Activated T-helper 1 cell treated with anti-CD3 and anti-CD28 coated beads, Interleukin-12 subunit alpha, Interleukin-12 subunit beta, Interleukin-2, Interleukin-4 antibody, amounts not matched to agents 30 ng/mL and 10 ng/mL and 1 ng/mL, durations not matched to agents 14 hours and 24 hours and 36 hours (primary cell): ENCODE measurements at regions of chr13 and their contacts with region 1.

Region 1: DNA sequence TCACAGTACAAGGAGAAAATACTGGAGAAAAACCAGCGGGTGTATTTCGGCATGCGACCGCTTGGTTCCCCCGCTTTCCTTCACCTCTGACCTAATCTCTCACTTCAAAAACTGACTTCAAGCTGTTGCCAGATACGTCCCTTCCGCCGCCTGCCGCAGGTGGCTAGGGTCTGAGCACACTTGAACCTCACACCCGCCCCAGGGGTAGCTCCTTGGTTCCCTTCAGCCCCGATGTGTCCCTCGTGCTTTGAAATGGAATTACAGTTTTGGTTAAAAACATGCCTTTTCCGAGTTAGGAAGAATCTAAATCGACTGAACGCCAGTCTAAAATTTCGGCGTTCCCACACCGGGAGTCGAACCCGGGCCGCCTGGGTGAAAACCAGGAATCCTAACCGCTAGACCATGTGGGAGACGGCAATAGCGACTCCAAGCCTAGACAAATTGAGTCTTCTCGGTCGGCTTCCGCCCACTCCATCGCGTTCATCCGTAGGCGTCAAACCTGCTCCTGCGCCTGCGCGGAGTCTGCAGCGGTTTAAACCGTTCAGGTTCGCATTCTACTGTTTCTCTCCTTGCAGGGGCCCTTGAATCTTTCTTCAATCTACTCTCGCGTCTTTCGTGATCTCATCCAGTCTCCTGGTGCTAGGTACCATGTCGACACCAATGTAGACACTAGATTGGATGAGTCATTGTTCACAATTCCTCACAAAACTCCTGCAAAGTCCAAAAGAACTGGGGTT is 71.5 kb downstream of the NUFIP1 start:
- DNase-seq: peak; percentile 94
- H3K4me3 Mint-ChIP-seq: no peak overlapping the region
- H3K27ac Mint-ChIP-seq: no peak overlapping the region
- H3K4me1 Mint-ChIP-seq: no peaks in the 10 kb centered on the region
- H3K27me3 Mint-ChIP-seq: no peaks in the 10 kb centered on the region

Region 2: GRCh38 chr13:44141725-44142539 is 775.8 kb before region 1 on chr13:
- intact Hi-C with region 1: loop called (anchors 1 kb)
- DNase-seq: peak; percentile 94
- H3K4me3 Mint-ChIP-seq: peak overlapping the region; percentile 85
- H3K27ac Mint-ChIP-seq: peak overlapping the region; percentile 82
- H3K4me1 Mint-ChIP-seq: peaks cover 26% of the 10 kb centered on the region
- H3K27me3 Mint-ChIP-seq: peaks cover 41% of the 10 kb centered on the region

Region 3: DNA sequence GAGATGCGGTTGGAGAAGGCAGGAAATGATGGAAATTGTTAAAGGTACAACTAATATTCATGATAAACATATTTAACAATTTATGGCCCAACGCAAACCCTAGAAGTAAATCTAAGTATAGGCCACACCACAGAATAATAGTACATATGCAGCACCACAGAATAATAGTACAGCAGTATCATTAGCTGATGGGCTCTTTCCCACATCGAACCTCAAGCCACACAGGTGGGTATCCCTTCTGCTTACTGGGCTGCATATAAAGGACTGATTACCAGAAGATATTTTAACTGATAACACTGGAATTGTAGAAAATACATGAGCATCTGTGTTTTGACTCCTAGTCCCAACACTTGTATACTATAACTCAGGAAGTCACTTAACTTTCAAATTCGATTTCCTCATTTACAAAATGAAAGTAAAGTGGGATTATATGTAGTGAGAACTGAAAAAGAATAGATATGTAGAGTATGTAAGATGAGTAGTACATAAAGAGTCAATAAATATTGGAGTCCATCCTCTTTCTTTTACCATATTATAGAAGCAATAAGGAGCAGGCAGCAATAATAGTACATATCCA is 433.1 kb before region 1 on chr13:
- intact Hi-C with region 1: loop called (anchors 1 kb)
- DNase-seq: no peak
- H3K4me3 Mint-ChIP-seq: peak overlapping the region; percentile 24
- H3K27ac Mint-ChIP-seq: no peak overlapping the region
- H3K4me1 Mint-ChIP-seq: peaks cover 17% of the 10 kb centered on the region
- H3K27me3 Mint-ChIP-seq: peaks cover 7% of the 10 kb centered on the region

Region 4: GRCh38 chr13:44768239-44768638 is 149.5 kb before region 1 on chr13:
- intact Hi-C with region 1: loop called (anchors 2 kb)
- DNase-seq: peak; percentile 63
- H3K4me3 Mint-ChIP-seq: peak overlapping the region; percentile 41
- H3K27ac Mint-ChIP-seq: peak overlapping the region; percentile 82
- H3K4me1 Mint-ChIP-seq: peaks cover 56% of the 10 kb centered on the region
- H3K27me3 Mint-ChIP-seq: no peaks in the 10 kb centered on the region

Region 5: DNA sequence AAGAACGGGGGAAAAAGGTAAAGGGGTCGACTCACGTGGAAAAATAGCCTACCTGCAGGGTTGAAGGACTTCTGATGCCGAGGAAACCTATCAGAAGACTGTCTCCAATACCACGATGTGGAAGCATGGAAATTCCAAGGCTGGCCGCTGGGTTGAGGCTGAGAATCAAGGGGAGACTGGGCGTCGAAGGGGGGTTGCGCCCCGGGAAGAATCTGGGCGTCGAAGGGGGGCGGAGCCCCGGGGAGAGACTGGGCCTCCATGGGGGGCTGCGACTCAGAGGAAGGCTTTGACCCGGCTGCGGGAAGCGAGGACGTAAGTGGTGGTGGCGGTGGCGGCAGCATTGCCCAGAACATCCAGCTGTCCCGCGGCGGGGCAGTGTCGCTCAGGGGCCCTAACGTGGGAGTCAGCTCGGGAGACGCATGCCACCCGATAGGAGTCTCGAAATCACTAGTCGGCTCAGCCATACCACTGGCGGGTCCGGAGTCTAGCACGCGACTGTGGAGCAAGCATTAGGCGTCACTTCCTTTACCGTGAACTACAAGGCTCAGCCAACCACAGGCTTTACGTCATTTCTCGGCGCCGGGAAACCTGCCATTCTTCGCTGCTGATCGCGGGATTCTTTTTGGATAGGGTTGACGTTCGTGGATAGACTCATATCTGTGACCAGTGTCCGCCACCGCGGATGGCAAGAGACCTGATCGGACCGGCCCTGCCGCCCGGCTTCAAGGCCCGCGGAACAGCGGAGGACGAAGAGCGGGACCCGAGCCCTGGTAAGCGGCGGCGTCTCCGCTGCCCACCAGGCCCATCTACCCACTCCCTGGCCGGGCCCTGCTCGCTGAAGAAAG is 71.4 kb after region 1 on chr13 and contains the starts of genes GPALPP1 and NUFIP1:
- intact Hi-C with region 1: loop called (anchors 1 kb)
- DNase-seq: peak; percentile 90
- H3K4me3 Mint-ChIP-seq: peak within 1 kb of the TSS; percentile 91
- H3K27ac Mint-ChIP-seq: peak within 1 kb of the TSS; percentile 91
- H3K4me1 Mint-ChIP-seq: peaks cover 43% of the 10 kb centered on the region
- H3K27me3 Mint-ChIP-seq: no peaks in the 10 kb centered on the region
- total RNA-seq, gene GPALPP1: 29.8 and 33.5 TPM in 2 replicates
- total RNA-seq, gene NUFIP1: 12.2 and 13.5 TPM in 2 replicates

Region 6: DNA sequence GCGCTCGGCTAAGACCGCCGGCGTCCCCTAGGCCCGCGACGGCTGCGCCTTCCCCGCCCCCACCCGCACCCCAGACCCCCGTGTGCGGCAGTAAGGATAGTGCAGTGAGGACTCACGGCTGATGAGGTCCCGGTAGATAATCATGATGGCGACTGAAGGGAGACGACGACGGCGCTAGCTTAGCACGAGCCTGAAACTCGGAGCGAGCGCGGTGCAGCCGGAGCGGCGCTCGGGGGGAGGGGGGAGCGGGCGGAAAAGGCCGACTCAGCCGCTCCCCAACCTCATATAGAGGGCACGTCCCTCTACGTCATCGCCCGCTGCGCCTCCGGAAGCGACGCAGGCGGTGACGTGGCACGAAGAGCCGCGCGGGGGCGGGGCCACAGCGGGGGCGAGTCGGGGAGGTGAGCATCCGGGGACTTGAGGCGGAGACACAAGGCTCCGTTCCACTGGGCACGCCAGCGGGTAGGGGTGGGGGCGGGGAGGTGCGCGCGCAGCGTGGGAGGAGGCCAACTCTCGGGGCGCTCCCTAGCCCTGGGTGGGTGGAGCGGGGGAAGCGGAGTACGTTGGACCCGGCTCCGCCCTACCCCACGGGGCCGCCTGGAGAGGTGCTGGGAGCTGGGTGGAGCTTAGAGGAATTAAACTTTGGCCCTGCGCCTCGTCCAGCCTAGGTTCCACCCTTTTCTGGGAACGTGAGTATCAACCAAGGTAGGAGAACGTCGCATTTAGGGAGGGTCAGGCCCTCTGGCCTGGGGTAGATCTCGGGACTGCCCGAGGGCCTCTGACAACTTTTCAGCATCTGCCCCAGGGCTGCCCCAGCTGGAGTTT is 423.4 kb after region 1 on chr13 and contains the start of gene TPT1:
- intact Hi-C with region 1: loop called (anchors 1 kb)
- DNase-seq: peak; percentile 99
- H3K4me3 Mint-ChIP-seq: peak within 1 kb of the TSS; percentile 99
- H3K27ac Mint-ChIP-seq: peak within 1 kb of the TSS; percentile 100
- H3K4me1 Mint-ChIP-seq: peaks cover 56% of the 10 kb centered on the region
- H3K27me3 Mint-ChIP-seq: no peaks in the 10 kb centered on the region
- total RNA-seq, gene TPT1: 2,353 and 2,360 TPM in 2 replicates